ENCODE measurements at regions of chr1 and their contacts with region 1.

Region 1: GRCh38 chr1:182149411-182149965 is 88.0 kb upstream of the ZNF648 start:
- DNase-seq: peak; percentile 76
- H3K4me3 ChIP-seq: no peak overlapping the region
- H3K27ac ChIP-seq: no peak overlapping the region
- H3K4me1 ChIP-seq: peaks cover 25% of the 10 kb centered on the region
- H3K27me3 ChIP-seq: no peaks in the 10 kb centered on the region
- CTCF ChIP-seq: no peak

Region 2: GRCh38 chr1:182181167-182181682 is 31.7 kb after region 1 on chr1:
- CTCF ChIA-PET with region 1: no interaction called
- dilution Hi-C with region 1: loop called (anchors 5 kb)
- in situ Hi-C with region 1: no loop called
- intact Hi-C with region 1: no loop called
- DNase-seq: peak; percentile 89
- H3K4me3 ChIP-seq: no peak overlapping the region
- H3K27ac ChIP-seq: no peak overlapping the region
- H3K4me1 ChIP-seq: peaks cover 24% of the 10 kb centered on the region
- H3K27me3 ChIP-seq: no peaks in the 10 kb centered on the region
- CTCF ChIP-seq: no peak

Region 3: GRCh38 chr1:182279724-182280503 is 130.4 kb after region 1 on chr1:
- CTCF ChIA-PET with region 1: no interaction called
- dilution Hi-C with region 1: no loop called
- in situ Hi-C with region 1: no loop called
- intact Hi-C with region 1: no loop called
- DNase-seq: no peak
- H3K4me3 ChIP-seq: no peak overlapping the region
- H3K27ac ChIP-seq: no peak overlapping the region
- H3K4me1 ChIP-seq: no peaks in the 10 kb centered on the region
- H3K27me3 ChIP-seq: no peaks in the 10 kb centered on the region
- CTCF ChIP-seq: no peak

Region 4: GRCh38 chr1:182406012-182406411 is 256.5 kb after region 1 on chr1:
- CTCF ChIA-PET with region 1: no interaction called
- dilution Hi-C with region 1: no loop called
- in situ Hi-C with region 1: no loop called
- intact Hi-C with region 1: no loop called
- DNase-seq: no peak
- H3K4me3 ChIP-seq: no peak overlapping the region
- H3K27ac ChIP-seq: no peak overlapping the region
- H3K4me1 ChIP-seq: no peaks in the 10 kb centered on the region
- H3K27me3 ChIP-seq: no peaks in the 10 kb centered on the region
- CTCF ChIP-seq: no peak